B cell (primary cell): ENCODE measurements at regions of chr19 and their contacts with region 1.

Region 1: DNA sequence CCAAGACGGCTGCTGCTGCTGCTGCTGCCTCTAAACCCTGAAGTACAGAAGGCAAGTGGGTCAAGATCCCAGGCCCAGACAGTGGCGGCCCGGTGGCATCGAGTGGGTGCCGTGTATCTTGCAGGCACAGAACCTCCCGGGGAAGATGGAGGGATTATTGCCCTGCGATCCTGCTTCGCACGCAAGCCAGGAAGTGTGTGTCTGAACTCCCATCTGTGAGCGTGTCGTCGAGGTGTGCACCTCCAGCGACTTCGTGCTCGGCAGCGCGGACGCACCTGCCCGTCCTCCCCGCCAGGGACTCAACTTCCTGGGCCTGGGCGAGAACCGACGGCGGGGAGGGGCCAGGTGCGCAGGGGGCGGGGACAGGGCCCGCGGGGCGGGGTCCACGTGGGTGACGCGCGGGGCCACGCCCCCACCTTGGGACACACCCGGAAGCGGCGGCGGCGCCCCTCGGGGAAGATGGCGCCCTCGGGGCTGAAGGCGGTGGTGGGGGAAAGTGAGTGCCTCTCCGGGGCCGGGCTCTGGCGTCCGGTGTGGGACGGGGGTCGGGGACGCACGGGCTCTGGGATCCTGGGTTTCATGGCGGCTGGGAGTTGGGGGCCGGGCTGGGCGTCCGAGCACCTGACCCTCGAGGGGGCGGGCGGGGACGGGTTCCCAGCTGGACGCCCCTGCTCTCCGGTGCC is at the start of gene STXBP2:
- DNase-seq: peak; percentile 93
- ATAC-seq: peak; percentile 98
- H3K4me3 ChIP-seq: peak within 1 kb of the TSS; percentile 58 to 89 (median 80)
- H3K4me3 Mint-ChIP-seq: peak within 1 kb of the TSS; percentile 90
- H3K27ac ChIP-seq: peak within 1 kb of the TSS; percentile 81 to 93
- H3K27ac Mint-ChIP-seq: peak within 1 kb of the TSS; percentile 94
- H3K4me1 ChIP-seq: peaks cover 17 to 21% of the 10 kb centered on the region in 2 donors
- H3K4me1 Mint-ChIP-seq: peaks cover 39% of the 10 kb centered on the region
- H3K27me3 ChIP-seq: no peaks in the 10 kb centered on the region
- H3K27me3 Mint-ChIP-seq: no peaks in the 10 kb centered on the region
- CTCF ChIP-seq: peak; percentile 35
- total RNA-seq, gene STXBP2: 208 and 222 TPM in 2 replicates

Region 2: GRCh38 chr19:7658219-7658686 is 21.4 kb after region 1 on chr19:
- CTCF ChIA-PET with region 1: interaction called, 3 read pairs
- POLR2A ChIA-PET with region 1: no interaction called
- intact Hi-C with region 1: loop called (anchors 1 kb)
- DNase-seq: peak; percentile 88
- ATAC-seq: peak; percentile 98
- H3K4me3 ChIP-seq: peak overlapping the region; percentile 25 to 55 (median 44)
- H3K4me3 Mint-ChIP-seq: peak overlapping the region; percentile 76
- H3K27ac ChIP-seq: peak overlapping the region; percentile 69 to 84
- H3K27ac Mint-ChIP-seq: peak overlapping the region; percentile 87
- H3K4me1 ChIP-seq: peaks cover 9 to 18% of the 10 kb centered on the region in 2 donors
- H3K4me1 Mint-ChIP-seq: peaks cover 10% of the 10 kb centered on the region
- H3K27me3 ChIP-seq: peaks cover 0 to 5% (median 0%) of the 10 kb centered on the region in 4 experiments
- H3K27me3 Mint-ChIP-seq: no peaks in the 10 kb centered on the region
- CTCF ChIP-seq: no peak